T-cell (primary cell): ENCODE measurements at regions of chr3 and their contacts with region 1.

Region 1: DNA sequence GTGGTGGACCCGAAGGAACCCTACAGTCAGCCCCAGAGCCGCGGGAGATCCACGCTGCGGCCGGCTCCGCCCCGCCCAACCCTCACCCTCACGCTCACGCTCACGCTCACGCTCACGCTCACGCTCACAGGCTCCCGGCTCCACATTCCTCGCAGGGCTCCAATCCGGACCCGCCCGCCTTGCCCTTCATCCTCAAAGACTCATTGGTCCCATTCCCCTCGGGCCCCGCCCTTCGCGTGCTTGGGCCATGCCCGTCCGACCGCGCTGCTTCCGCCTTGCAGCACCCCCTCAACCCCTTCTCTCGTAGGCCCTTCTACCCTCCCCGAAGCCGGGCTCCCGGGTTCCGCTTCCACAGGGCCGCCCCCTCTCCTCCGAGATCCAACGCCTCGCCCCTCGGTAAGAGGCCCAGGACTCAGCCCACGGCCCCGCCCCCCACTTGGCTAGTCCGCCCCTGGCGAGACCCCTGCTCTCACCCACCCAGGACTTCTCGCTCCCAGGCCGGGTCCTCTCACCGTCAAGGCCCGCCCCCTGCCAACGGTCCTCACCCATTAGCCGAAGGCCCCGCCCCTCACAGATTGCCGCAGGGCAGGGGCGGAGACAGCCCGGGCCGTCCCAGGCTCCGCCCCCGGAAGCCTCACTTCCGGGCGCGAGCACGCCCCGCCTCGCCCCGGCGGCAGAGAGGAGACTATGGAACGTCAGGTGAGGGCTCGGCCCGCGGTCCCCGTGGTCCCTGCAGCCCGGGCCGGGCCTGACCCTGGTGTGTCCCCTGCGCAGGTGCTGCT is at the start of gene APEH:
- DNase-seq: peak; percentile 91 to 99 (median 95)
- ATAC-seq: peak; percentile 85 to 89 (median 86)
- H3K4me3 ChIP-seq: peak within 1 kb of the TSS; percentile 63 to 80
- H3K4me3 Mint-ChIP-seq: peak within 1 kb of the TSS; percentile 87 to 93 (median 90)
- H3K27ac ChIP-seq: peak within 1 kb of the TSS; percentile 90
- H3K27ac Mint-ChIP-seq: peak within 1 kb of the TSS; percentile 93 to 97
- H3K4me1 ChIP-seq: peaks cover 12 to 41% of the 10 kb centered on the region in 2 experiments
- H3K4me1 Mint-ChIP-seq: peaks cover 41 to 42% (median 42%) of the 10 kb centered on the region in 3 donors
- H3K27me3 ChIP-seq: no peaks in the 10 kb centered on the region
- H3K27me3 Mint-ChIP-seq: no peaks in the 10 kb centered on the region
- total RNA-seq, gene APEH: 82.8 to 162 (median 141) TPM

Region 2: GRCh38 chr3:48268381-48269183 is 1405.3 kb before region 1 on chr3:
- CTCF ChIA-PET with region 1: no interaction called
- POLR2A ChIA-PET with region 1: no interaction called
- DNase-seq: peak; percentile 45 to 88 (median 75)
- ATAC-seq: peak; percentile 96 to 98 (median 96)
- H3K4me3 ChIP-seq: peak overlapping the region in 1 of 2 donors; percentile 27
- H3K4me3 Mint-ChIP-seq: peak overlapping the region; percentile 72 to 87 (median 76)
- H3K27ac ChIP-seq: peak overlapping the region; percentile 80
- H3K27ac Mint-ChIP-seq: peak overlapping the region; percentile 93 to 94
- H3K4me1 ChIP-seq: peaks cover 20 to 25% of the 10 kb centered on the region in 2 experiments
- H3K4me1 Mint-ChIP-seq: peaks cover 32 to 39% (median 33%) of the 10 kb centered on the region in 3 donors
- H3K27me3 ChIP-seq: no peaks in the 10 kb centered on the region
- H3K27me3 Mint-ChIP-seq: no peaks in the 10 kb centered on the region

Region 3: GRCh38 chr3:48285132-48285531 is 1388.8 kb before region 1 on chr3:
- CTCF ChIA-PET with region 1: no interaction called
- POLR2A ChIA-PET with region 1: no interaction called
- DNase-seq: no peak
- ATAC-seq: no peak
- H3K4me3 ChIP-seq: no peak overlapping the region
- H3K4me3 Mint-ChIP-seq: no peak overlapping the region
- H3K27ac ChIP-seq: no peak overlapping the region
- H3K27ac Mint-ChIP-seq: no peak overlapping the region
- H3K4me1 ChIP-seq: no peaks in the 10 kb centered on the region
- H3K4me1 Mint-ChIP-seq: peaks cover 0 to 5% (median 0%) of the 10 kb centered on the region in 3 donors
- H3K27me3 ChIP-seq: no peaks in the 10 kb centered on the region
- H3K27me3 Mint-ChIP-seq: no peaks in the 10 kb centered on the region

Region 4: GRCh38 chr3:49316696-49317457 is 357.0 kb before region 1 on chr3:
- CTCF ChIA-PET with region 1: no interaction called
- POLR2A ChIA-PET with region 1: interaction called in 1 of 2 experiments, 12 read pairs
- DNase-seq: no peak
- ATAC-seq: no peak
- H3K4me3 ChIP-seq: no peak overlapping the region
- H3K4me3 Mint-ChIP-seq: no peak overlapping the region
- H3K27ac ChIP-seq: no peak overlapping the region
- H3K27ac Mint-ChIP-seq: no peak overlapping the region
- H3K4me1 ChIP-seq: no peaks in the 10 kb centered on the region
- H3K4me1 Mint-ChIP-seq: no peaks in the 10 kb centered on the region
- H3K27me3 ChIP-seq: no peaks in the 10 kb centered on the region
- H3K27me3 Mint-ChIP-seq: no peaks in the 10 kb centered on the region

Region 5: DNA sequence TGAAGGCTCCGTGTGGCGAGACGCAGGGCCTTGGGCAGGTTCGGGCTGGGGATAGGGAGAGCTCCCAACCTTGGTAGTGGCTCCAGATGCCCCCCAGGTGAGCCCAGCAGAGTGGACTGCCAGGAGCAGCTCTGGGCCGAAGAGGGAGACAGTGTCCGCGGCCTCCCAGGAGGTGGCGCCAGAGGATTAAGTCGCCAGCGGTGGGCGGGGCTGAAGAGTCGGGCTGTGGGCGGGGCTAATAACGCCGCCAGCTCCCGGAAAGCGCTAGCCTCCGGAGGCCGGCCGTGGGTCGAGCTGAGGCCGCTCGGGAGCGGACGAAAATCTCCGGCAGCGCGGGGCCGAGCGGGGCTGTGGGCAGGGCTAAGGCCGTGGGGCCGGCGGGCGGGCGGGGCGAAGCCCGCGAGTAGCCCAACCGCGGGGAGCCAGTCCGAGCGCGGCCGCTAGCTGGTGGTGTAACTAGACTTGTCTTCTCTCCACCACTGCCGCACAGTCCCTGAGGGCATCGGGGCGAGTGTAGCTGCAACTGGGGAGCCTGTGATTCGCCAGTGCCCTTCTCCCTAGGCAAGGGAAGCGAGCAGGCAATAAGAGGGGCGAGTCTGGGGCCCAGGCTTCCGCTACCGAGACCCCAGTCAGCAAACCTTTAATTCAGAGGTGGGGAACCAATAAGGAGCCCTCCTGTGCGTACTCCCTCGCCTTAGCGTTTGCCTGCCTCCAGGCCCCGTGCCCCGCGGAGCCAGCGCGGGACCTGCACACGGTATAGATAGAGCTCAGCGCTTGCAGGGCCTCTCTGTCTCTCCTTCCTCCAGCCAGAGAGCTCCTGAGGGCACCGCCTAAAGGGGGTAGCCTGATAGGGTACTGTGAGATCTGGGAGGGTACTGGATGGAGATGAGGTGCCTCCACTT is 134.0 kb before region 1 on chr3:
- CTCF ChIA-PET with region 1: interaction called, 33 to 66 read pairs
- POLR2A ChIA-PET with region 1: interaction called in 1 of 2 experiments, 3 read pairs
- DNase-seq: peak; percentile 62 to 96 (median 87)
- ATAC-seq: peak; percentile 91 to 97 (median 94)
- H3K4me3 ChIP-seq: peak overlapping the region; percentile 53 to 68
- H3K4me3 Mint-ChIP-seq: peak overlapping the region; percentile 74 to 78 (median 76)
- H3K27ac ChIP-seq: no peak overlapping the region
- H3K27ac Mint-ChIP-seq: peak overlapping the region; percentile 46 to 73
- H3K4me1 ChIP-seq: peaks cover 0 to 12% of the 10 kb centered on the region in 2 experiments
- H3K4me1 Mint-ChIP-seq: peaks cover 3 to 8% (median 5%) of the 10 kb centered on the region in 3 donors
- H3K27me3 ChIP-seq: peaks cover 0 to 5% of the 10 kb centered on the region in 2 experiments
- H3K27me3 Mint-ChIP-seq: peaks cover 2 to 8% of the 10 kb centered on the region in 2 donors

Region 6: GRCh38 chr3:49700453-49701128 is 26.7 kb after region 1 on chr3:
- CTCF ChIA-PET with region 1: interaction called in 1 of 2 experiments, 10 read pairs
- POLR2A ChIA-PET with region 1: no interaction called
- DNase-seq: no peak
- ATAC-seq: no peak
- H3K4me3 ChIP-seq: no peak overlapping the region
- H3K4me3 Mint-ChIP-seq: no peak overlapping the region
- H3K27ac ChIP-seq: no peak overlapping the region
- H3K27ac Mint-ChIP-seq: no peak overlapping the region
- H3K4me1 ChIP-seq: peaks cover 0 to 9% of the 10 kb centered on the region in 2 experiments
- H3K4me1 Mint-ChIP-seq: no peaks in the 10 kb centered on the region
- H3K27me3 ChIP-seq: no peaks in the 10 kb centered on the region
- H3K27me3 Mint-ChIP-seq: no peaks in the 10 kb centered on the region